Sciatic nerve (tissue), 2 donors: ENCODE measurements at regions of chr4 and their contacts with region 1.

Region 1: DNA sequence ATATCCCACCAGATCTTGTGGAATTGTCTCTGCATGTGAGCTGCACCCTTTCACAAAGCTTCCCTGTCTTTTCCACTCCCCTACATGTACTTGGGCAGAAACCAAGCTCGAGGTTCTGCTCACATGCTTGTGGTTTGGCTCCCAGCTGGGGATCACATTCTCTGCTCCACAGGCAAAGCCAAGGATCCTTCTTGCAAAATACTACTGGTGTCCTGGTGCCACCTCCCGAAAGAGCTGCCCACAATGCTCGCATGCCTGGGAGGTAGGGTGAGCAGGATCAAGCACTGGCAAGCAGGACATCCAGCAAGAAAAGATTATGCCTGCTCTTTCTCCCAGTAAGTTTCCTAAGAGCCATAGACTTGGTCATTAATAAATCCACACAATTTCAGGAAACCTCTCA is 45.1 kb upstream of the PPARGC1A start:
- DNase-seq: peak; percentile 83
- ATAC-seq: peak; percentile 97

Region 2: GRCh38 chr4:22003878-22004277 is 1931.0 kb before region 1 on chr4:
- intact Hi-C with region 1: loop called (anchors 10 kb)
- DNase-seq: no peak
- ATAC-seq: no peak

Region 3: DNA sequence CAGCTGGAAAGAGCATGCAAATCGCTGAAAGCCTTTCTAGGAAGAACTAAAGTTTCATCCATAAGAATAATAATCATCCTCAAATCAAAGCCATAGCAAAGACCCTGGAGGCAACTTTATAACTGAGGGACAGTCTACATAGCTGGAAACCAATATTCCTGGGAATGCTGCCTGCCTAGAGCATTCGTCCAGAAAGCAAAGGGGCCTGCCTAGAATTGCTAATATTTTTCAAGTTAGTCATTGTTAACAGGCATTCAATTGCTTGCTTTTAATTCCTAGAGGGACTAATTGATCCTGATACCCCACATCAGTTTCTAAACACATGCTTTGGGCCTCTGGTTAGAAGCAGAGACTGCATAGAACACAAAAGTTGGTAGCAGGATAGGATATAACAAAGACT is 40.9 kb before region 1 on chr4:
- intact Hi-C with region 1: no loop called
- DNase-seq: no peak
- ATAC-seq: no peak